ENCODE measurements at regions of chr12 and their contacts with region 1.

Region 1: DNA sequence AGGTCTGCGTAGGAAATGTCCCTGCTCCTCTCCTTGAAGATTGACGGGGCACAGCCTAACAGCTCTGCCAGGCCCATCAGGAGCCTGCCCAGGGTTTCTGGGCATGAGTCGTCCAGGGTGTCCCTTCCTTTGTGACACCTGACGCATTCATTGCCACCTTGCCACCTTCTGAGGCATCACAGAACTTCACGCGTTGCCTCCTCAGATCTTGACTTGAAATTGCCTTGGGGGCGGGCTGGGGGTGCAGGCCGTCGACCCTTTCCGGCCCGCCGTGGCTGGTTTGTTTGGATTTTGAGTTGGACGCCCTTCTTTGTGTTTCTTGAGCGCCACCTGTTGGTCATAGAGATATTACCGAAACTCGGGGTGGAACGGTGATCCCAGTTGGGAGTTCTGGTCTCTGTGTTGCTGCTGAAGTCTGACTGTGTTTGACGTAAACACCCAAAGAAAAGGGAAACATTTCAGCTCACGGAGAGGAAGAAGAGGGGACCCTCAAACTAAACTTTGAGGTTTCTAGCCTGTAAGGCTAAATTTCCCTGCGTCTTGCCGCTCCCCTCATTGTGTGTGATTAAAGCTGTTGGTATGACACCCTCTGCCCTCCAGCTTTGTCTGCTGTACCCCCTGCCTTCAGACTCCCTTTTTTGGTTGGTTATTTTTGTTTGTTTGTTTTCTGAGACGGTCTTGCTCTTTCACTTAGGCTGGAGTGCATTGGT is 44.6 kb downstream of the MLXIP start:
- DNase-seq: peak; percentile 63 to 72 (median 69)
- H3K4me3 ChIP-seq: no peak overlapping the region
- H3K4me3 Mint-ChIP-seq: peak overlapping the region in 3 of 8 donors; percentile 53 to 78 (median 73)
- H3K27ac ChIP-seq: no peak overlapping the region
- H3K27ac Mint-ChIP-seq: peak overlapping the region; percentile 3 to 88 (median 69)
- H3K4me1 ChIP-seq: peaks cover 19% of the 10 kb centered on the region
- H3K4me1 Mint-ChIP-seq: peaks cover 20 to 37% (median 23%) of the 10 kb centered on the region in 4 donors
- H3K27me3 ChIP-seq: no peaks in the 10 kb centered on the region
- H3K27me3 Mint-ChIP-seq: no peaks in the 10 kb centered on the region

Region 2: DNA sequence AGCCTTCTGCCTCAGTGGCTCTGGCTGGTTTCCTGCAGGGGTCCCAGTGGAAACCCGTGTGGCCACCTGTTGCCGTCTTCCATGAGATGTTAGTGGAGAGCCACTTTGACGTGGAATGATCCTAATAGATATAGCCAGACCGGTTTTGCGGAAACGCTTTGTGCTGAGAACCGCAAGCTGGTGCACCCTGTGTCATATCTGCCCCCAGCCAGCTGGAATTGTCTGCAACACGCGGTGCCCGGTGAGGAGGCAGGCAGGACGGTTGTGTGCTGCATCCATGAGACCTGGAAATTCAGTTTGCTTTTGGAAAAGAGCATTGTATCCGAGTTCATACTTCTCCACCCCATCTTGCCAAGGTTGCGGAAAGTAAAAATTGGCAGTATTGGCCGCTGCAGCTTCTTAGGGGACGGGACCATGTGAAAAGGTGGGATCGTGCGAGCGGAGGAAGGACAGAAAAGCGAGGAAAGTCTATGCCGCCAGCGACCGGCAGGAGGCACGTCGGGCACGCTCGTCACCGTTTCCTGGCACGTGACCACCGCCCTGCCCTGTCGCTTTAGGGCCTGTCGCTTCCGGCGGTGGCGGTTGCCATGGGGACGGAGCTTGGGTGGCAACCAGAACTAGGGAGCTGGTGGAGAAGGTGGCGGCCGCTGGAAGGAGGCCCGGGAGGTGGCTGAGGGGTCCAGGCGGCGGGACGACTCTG is 205.1 kb before region 1 on chr12 and contains the start of gene CFAP251:
- CTCF ChIA-PET with region 1: interaction called, 17 read pairs
- POLR2A ChIA-PET with region 1: no interaction called
- intact Hi-C with region 1: no loop called
- DNase-seq: peak; percentile 93 to 98 (median 94)
- H3K4me3 ChIP-seq: peak within 1 kb of the TSS; percentile 42 to 63
- H3K4me3 Mint-ChIP-seq: peak within 1 kb of the TSS; percentile 67 to 95 (median 86)
- H3K27ac ChIP-seq: peak within 1 kb of the TSS; percentile 69
- H3K27ac Mint-ChIP-seq: peak within 1 kb of the TSS; percentile 91 to 99 (median 97)
- H3K4me1 ChIP-seq: peaks cover 14% of the 10 kb centered on the region
- H3K4me1 Mint-ChIP-seq: peaks cover 5 to 13% (median 13%) of the 10 kb centered on the region in 4 donors
- H3K27me3 ChIP-seq: no peaks in the 10 kb centered on the region
- H3K27me3 Mint-ChIP-seq: no peaks in the 10 kb centered on the region
- total RNA-seq, gene CFAP251: 0.23 to 0.44 TPM

Region 3: DNA sequence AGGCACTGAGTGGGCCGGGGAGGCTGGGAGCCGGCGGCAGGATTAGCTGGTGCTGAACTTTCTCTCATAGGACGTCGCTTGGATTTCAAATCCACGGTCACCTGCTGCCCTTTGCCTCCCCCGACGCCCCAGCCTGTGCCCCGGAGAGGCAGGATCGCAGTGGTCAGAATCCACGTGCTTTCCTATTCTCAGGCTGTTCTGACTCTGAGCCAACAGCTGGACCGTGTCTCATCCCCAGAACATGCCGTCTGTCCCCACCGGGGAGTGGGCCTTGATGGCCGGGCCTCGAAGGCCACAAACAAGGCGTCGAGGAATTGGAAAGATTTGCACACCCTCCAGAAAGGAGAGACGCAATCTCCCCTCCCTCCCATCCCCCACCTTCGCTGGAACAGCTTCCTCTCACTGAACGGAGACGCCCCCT is 63.1 kb before region 1 on chr12:
- CTCF ChIA-PET with region 1: interaction called, 186 read pairs
- POLR2A ChIA-PET with region 1: interaction called, 13 read pairs
- intact Hi-C with region 1: no loop called
- DNase-seq: no peak
- H3K4me3 ChIP-seq: no peak overlapping the region
- H3K4me3 Mint-ChIP-seq: no peak overlapping the region
- H3K27ac ChIP-seq: no peak overlapping the region
- H3K27ac Mint-ChIP-seq: no peak overlapping the region
- H3K4me1 ChIP-seq: no peaks in the 10 kb centered on the region
- H3K4me1 Mint-ChIP-seq: peaks cover 0 to 4% (median 1%) of the 10 kb centered on the region in 4 donors
- H3K27me3 ChIP-seq: no peaks in the 10 kb centered on the region
- H3K27me3 Mint-ChIP-seq: no peaks in the 10 kb centered on the region

Region 4: DNA sequence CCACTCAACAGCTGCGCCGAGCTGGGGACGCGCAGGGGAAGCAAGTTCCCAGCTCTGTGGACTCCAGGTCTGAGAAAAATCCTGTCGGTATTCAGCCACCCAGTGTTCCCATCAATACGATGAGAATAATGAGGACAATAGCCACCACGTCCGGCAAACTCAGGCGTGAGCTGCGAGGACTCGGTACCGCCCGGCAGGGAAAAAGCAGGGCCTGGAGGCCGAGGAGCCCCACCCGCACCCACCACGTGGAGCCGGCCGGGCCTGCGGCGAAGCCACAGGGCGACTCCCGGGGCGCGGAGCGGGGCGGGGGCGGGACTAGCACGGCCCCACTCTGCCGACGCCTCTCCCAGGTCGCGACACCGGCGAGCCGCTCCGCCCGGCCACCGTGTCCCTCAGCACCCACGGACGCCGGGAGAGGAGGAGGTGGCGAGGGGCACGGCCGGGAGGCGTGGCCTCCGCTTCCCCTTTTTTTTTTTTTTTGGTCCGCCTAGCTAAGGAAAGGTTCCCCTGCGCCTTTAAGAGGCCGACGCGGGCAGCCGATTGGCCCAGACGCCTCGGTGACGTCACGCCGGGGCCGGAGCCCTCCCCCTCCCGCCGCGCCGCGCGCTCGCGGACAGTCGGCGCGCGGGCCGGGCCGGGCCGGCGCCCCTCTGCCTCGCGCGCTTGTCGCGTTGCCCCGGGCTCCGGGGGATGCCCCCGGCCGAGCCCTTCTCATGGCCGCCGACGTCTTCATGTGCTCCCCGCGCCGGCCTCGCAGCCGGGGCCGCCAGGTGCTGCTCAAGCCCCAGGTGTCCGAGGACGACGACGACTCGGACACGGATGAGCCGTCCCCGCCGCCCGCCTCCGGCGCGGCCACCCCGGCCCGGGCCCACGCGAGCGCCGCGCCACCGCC is 44.8 kb before region 1 on chr12 and contains the start of gene MLXIP:
- CTCF ChIA-PET with region 1: interaction called, 45 read pairs
- POLR2A ChIA-PET with region 1: interaction called, 5 read pairs
- intact Hi-C with region 1: loop called (anchors 1 kb)
- DNase-seq: peak; percentile 83 to 87 (median 85)
- H3K4me3 ChIP-seq: peak within 1 kb of the TSS; percentile 82 to 92
- H3K4me3 Mint-ChIP-seq: peak within 1 kb of the TSS; percentile 84 to 98 (median 95)
- H3K27ac ChIP-seq: peak within 1 kb of the TSS; percentile 69
- H3K27ac Mint-ChIP-seq: peak within 1 kb of the TSS; percentile 77 to 99 (median 95)
- H3K4me1 ChIP-seq: peaks cover 54% of the 10 kb centered on the region
- H3K4me1 Mint-ChIP-seq: peaks cover 26 to 46% (median 35%) of the 10 kb centered on the region in 4 donors
- H3K27me3 ChIP-seq: no peaks in the 10 kb centered on the region
- H3K27me3 Mint-ChIP-seq: no peaks in the 10 kb centered on the region
- total RNA-seq, gene MLXIP: 79.5 to 88.1 TPM

Region 5: GRCh38 chr12:122190842-122191668 is 67.8 kb after region 1 on chr12:
- CTCF ChIA-PET with region 1: interaction called, 10 read pairs
- POLR2A ChIA-PET with region 1: no interaction called
- intact Hi-C with region 1: no loop called
- DNase-seq: peak; percentile 45 to 60 (median 59)
- H3K4me3 ChIP-seq: no peak overlapping the region
- H3K4me3 Mint-ChIP-seq: no peak overlapping the region
- H3K27ac ChIP-seq: no peak overlapping the region
- H3K27ac Mint-ChIP-seq: no peak overlapping the region
- H3K4me1 ChIP-seq: no peaks in the 10 kb centered on the region
- H3K4me1 Mint-ChIP-seq: peaks cover 0 to 4% (median under 1%) of the 10 kb centered on the region in 4 donors
- H3K27me3 ChIP-seq: no peaks in the 10 kb centered on the region
- H3K27me3 Mint-ChIP-seq: peaks cover 2% of the 10 kb centered on the region in 2 donors